Breast epithelium (tissue), 4 donors: ENCODE measurements at regions of chr9 and their contacts with region 1.

Region 1: DNA sequence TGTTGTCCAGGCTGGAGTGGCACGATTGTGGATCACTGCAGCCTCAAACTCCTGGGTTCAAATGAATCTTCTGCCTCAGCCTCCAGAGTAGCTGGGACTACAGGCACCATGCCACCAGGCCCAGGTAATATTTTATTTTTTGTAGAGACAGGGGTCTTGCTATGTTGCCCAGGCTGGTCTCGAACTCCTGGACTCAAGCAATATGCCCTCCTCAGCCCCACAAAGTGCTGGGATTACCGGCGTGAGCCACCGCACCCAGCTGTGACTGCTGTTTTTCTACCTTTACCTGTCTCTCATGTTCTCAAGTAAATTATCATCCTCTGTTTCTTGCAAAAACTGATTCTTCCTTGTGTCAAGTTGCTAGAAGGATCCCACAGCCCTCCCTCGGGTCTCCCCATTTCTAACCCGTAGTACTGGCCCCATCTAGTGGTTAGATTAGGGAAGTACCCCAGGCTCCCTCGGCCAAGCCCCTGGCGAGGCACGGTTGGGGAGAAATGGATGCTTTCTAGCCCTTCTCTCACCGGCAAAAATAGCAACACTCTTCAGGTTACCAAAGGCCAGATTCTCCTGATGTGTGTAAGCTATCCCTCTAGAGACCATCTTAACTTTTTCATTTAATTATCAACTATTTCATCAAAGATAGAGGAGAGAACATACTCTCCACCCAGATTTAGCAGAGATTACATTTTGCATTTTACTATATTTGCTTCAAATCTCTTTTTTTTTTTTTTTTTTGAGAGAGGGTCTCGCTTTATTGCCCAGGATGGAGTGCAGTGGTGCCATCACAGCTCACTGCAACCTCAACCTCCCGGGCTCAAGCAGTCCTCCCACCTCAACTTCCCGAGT is 19.2 kb upstream of the TOR1B start:
- DNase-seq: peak; percentile 63 to 70
- H3K4me3 ChIP-seq: no peak overlapping the region
- H3K27ac ChIP-seq: no peak overlapping the region
- H3K4me1 ChIP-seq: no peaks in the 10 kb centered on the region
- H3K27me3 ChIP-seq: no peaks in the 10 kb centered on the region
- CTCF ChIP-seq: peak; percentile 87 to 95 (median 94)
- POLR2A ChIP-seq: no peak

Region 2: GRCh38 chr9:129641746-129642513 is 141.8 kb before region 1 on chr9 and contains the start of gene ASB6:
- intact Hi-C with region 1: loop called (anchors 10 kb)
- DNase-seq: peak; percentile 94 to 98
- H3K4me3 ChIP-seq: peak within 1 kb of the TSS; percentile 90 to 94 (median 92)
- H3K27ac ChIP-seq: peak within 1 kb of the TSS; percentile 86 to 92
- H3K4me1 ChIP-seq: peaks cover 3 to 16% of the 10 kb centered on the region in 2 donors
- H3K27me3 ChIP-seq: no peaks in the 10 kb centered on the region
- CTCF ChIP-seq: peak; percentile 99 to 100 (median 100)
- POLR2A ChIP-seq: peak; percentile 29
- total RNA-seq, gene ASB6: 11.2 to 24.4 (median 21.6) TPM

Region 3: GRCh38 chr9:129737479-129738274 is 46.1 kb before region 1 on chr9:
- intact Hi-C with region 1: loop called (anchors 5 kb)
- DNase-seq: peak; percentile 76 to 91
- H3K4me3 ChIP-seq: peak overlapping the region; percentile 51 to 71 (median 61)
- H3K27ac ChIP-seq: peak overlapping the region; percentile 83 to 84
- H3K4me1 ChIP-seq: peaks cover 0 to 3% of the 10 kb centered on the region in 2 donors
- H3K27me3 ChIP-seq: no peaks in the 10 kb centered on the region
- CTCF ChIP-seq: peak; percentile 98 to 99 (median 99)
- POLR2A ChIP-seq: no peak

Region 4: DNA sequence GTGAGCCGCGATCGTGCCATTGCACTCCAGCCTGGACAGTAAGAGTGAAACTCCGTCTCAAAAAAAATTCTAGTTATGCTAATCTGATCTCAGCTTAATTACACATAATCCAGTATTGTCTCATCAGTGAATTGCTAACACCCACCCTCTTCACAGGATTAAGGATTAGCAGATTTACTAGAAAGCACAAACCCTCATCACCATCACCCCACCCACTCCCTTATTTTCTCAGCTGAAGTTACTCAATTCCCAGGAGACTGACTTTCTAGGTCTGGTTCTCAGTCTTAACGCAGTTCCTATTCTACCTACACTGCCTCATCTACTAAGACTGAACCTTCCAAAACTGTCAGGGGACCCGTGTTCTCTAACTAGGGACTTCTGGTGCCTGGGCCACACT is 28.2 kb after region 1 on chr9:
- intact Hi-C with region 1: no loop called
- DNase-seq: no peak
- H3K4me3 ChIP-seq: no peak overlapping the region
- H3K27ac ChIP-seq: no peak overlapping the region
- H3K4me1 ChIP-seq: no peaks in the 10 kb centered on the region
- H3K27me3 ChIP-seq: no peaks in the 10 kb centered on the region
- CTCF ChIP-seq: no peak
- POLR2A ChIP-seq: no peak

Region 5: GRCh38 chr9:130732131-130732530 is 948.4 kb after region 1 on chr9:
- intact Hi-C with region 1: no loop called
- DNase-seq: no peak
- H3K4me3 ChIP-seq: no peak overlapping the region
- H3K27ac ChIP-seq: peak overlapping the region; percentile 56 to 61
- H3K4me1 ChIP-seq: peaks cover 0 to 6% of the 10 kb centered on the region in 2 donors
- H3K27me3 ChIP-seq: no peaks in the 10 kb centered on the region
- CTCF ChIP-seq: no peak
- POLR2A ChIP-seq: no peak